ENCODE measurements at regions of chr15 and their contacts with region 1.

Region 1: DNA sequence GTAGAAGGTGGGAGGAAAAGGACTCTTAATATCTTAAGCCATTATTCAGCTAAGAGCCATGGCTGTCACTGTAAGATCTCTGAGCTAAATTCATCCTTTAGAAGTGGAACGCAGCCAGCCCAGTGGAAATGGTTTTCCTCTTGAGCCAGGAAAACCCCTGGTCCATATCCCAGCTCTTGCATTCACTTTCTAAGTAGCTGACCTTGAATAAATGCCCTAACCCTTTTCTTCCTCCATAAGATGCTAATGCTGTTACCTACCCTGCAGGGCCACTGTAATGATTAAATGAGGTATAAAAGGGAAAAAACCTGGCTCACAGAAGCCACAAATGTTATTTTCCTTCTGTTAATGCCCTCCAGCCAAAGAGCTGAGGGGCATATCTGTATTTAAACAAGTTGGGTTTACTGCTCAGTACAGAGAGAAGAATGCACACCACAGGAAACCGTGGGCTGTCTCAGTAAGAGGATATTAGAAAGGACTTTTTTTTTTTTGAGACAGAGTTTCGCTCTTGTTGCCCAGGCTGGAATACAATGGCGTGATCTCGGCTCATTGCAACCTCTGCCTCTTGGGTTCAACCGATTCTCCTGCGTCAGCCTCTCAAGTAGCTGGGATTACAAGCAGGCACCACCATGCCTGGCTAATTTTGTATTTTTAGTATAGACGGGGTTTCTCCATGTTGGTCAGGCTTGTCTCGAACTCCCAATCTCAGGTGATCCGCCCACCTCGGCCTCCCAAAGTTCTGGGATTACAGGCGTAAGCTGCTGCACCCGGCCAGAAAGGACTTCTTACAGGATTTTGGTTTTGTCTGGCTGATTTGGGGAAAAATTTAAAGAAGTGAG is 6.8 kb downstream of the UBL7 start:
- DNase-seq: peak; percentile 63
- ATAC-seq: peak; percentile 88
- H3K4me3 Mint-ChIP-seq: no peak overlapping the region
- H3K27ac Mint-ChIP-seq: peak overlapping the region; percentile 73
- H3K4me1 Mint-ChIP-seq: peaks cover 38% of the 10 kb centered on the region
- H3K27me3 Mint-ChIP-seq: no peaks in the 10 kb centered on the region
- CTCF ChIP-seq: no peak

Region 2: GRCh38 chr15:74438721-74439316 is 15.3 kb before region 1 on chr15:
- CTCF ChIA-PET with region 1: interaction called, 18 read pairs
- POLR2A ChIA-PET with region 1: interaction called, 9 read pairs
- intact Hi-C with region 1: no loop called
- DNase-seq: peak; percentile 88
- ATAC-seq: peak; percentile 78
- H3K4me3 Mint-ChIP-seq: no peak overlapping the region
- H3K27ac Mint-ChIP-seq: no peak overlapping the region
- H3K4me1 Mint-ChIP-seq: peaks cover 32% of the 10 kb centered on the region
- H3K27me3 Mint-ChIP-seq: no peaks in the 10 kb centered on the region
- CTCF ChIP-seq: peak; percentile 87

Region 3: GRCh38 chr15:74470631-74471395 is 16.7 kb after region 1 on chr15:
- CTCF ChIA-PET with region 1: no interaction called
- POLR2A ChIA-PET with region 1: no interaction called
- intact Hi-C with region 1: no loop called
- DNase-seq: no peak
- ATAC-seq: no peak
- H3K4me3 Mint-ChIP-seq: no peak overlapping the region
- H3K27ac Mint-ChIP-seq: no peak overlapping the region
- H3K4me1 Mint-ChIP-seq: peaks cover 4% of the 10 kb centered on the region
- H3K27me3 Mint-ChIP-seq: no peaks in the 10 kb centered on the region
- CTCF ChIP-seq: no peak